CD8-positive, alpha-beta memory T cell (primary cell): ENCODE measurements at regions of chr6 and their contacts with region 1.

Region 1: GRCh38 chr6:157764178-157765033 is 58.6 kb upstream of the SNX9 start:
- DNase-seq: peak; percentile 72 to 94 (median 86)
- H3K4me3 ChIP-seq: peak overlapping the region; percentile 23
- H3K4me3 Mint-ChIP-seq: peak overlapping the region; percentile 47 to 90 (median 80)
- H3K27ac ChIP-seq: no peak overlapping the region
- H3K27ac Mint-ChIP-seq: peak overlapping the region; percentile 78 to 95 (median 90)
- H3K4me1 ChIP-seq: peaks cover 65% of the 10 kb centered on the region
- H3K4me1 Mint-ChIP-seq: peaks cover 46 to 65% (median 65%) of the 10 kb centered on the region in 3 donors
- H3K27me3 ChIP-seq: no peaks in the 10 kb centered on the region
- H3K27me3 Mint-ChIP-seq: peaks cover 1 to 6% of the 10 kb centered on the region in 2 donors

Region 2: DNA sequence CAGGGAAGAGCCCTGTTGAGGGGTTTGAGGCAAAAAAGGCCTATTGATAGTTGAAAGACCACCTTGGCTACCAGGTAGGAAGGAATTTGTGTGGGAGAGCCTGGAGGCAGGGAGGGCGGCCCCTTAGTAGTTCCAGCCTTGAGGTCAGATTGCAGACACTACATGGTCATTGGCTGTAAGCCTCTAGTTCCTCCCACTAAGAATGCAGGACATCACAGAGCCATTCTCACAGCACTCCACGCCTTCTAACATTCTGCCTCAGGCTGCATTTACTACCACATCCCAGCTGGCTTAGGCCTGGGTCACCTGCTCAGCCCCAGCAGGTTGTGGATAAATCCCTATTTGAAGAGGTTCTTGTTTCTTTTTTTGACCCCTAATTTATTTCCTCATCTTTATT is 32.4 kb before region 1 on chr6:
- CTCF ChIA-PET with region 1: no interaction called
- POLR2A ChIA-PET with region 1: no interaction called
- DNase-seq: no peak
- H3K4me3 ChIP-seq: no peak overlapping the region
- H3K4me3 Mint-ChIP-seq: no peak overlapping the region
- H3K27ac ChIP-seq: no peak overlapping the region
- H3K27ac Mint-ChIP-seq: no peak overlapping the region
- H3K4me1 ChIP-seq: no peaks in the 10 kb centered on the region
- H3K4me1 Mint-ChIP-seq: no peaks in the 10 kb centered on the region
- H3K27me3 ChIP-seq: no peaks in the 10 kb centered on the region
- H3K27me3 Mint-ChIP-seq: peaks cover 3 to 7% of the 10 kb centered on the region in 2 donors

Region 3: DNA sequence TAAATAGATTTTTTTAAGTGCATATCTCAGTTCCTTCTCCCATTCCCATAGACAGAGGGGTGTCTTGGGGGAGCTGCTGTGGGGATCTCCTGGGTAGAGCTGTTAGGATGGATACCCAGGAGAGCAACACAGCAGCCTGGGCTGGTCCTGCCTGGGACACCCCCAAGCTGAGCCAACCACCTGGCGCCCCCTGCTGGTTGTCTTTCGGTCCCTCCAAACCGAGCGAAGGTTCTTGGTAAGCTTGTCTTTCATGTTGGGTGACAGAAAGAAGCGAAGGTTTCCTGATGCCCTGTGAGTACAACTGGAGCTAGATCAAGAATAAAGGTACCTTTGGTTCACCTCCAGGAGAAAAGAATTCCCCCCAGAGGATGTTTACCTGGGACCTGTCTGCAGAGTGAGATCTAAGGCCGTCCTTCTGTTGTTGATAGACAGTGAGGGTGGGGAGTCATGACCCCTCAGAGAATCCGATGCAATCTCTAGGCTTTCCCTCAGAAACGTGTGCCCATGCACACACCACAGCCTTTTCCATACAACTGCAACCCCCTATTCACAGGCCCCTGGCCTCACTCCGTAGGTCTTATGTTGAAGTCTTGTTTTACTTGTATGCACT is 109.4 kb after region 1 on chr6:
- CTCF ChIA-PET with region 1: interaction called, 157 read pairs
- POLR2A ChIA-PET with region 1: no interaction called
- DNase-seq: peak; percentile 57 to 81 (median 65)
- H3K4me3 ChIP-seq: no peak overlapping the region
- H3K4me3 Mint-ChIP-seq: no peak overlapping the region
- H3K27ac ChIP-seq: no peak overlapping the region
- H3K27ac Mint-ChIP-seq: peak overlapping the region in 2 of 8 donors; percentile 10 to 38
- H3K4me1 ChIP-seq: peaks cover 18% of the 10 kb centered on the region
- H3K4me1 Mint-ChIP-seq: peaks cover 2 to 6% (median 5%) of the 10 kb centered on the region in 3 donors
- H3K27me3 ChIP-seq: no peaks in the 10 kb centered on the region
- H3K27me3 Mint-ChIP-seq: no peaks in the 10 kb centered on the region